Esophagus squamous epithelium (tissue), 5 donors: ENCODE measurements at regions of chr4 and their contacts with region 1.

Region 1: DNA sequence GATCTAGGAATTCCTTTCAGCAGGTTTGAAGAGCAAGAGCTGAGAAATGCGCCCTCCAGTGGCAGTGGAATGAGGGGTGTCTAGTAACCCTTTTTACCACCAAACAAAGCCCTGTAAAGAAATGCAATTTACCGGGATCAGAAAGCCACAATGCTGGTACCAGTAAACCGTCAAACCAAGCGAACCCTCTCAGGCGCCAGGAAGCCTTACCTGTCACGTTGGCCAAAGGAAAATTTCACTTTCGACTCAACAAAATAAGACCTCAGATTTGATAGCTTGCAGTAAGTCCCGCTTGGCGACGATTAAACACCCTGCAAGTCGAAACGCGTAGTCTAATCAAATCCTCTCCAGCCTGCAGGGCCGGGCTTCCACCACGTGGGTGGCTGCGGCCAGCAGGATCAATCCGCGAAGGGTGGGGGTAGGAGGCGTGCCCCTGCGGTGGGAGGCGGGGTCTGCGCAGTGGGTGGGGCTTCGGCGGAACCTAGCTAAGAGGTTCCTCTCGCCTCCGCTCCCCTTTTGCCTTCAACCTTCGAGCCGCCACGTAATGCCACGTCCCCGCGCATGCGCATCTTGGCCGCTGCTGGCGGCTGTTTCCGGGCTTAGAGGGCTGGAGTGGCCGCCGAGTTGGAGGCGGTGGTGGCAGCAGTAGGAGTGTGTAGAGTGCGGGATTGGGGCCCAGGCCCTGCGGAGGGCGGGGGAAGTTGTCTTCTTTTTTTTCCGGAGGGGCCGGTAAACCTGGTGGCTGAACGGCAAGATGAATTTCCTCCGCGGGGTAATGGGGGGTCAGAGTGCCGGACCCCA is at the start of gene USO1:
- DNase-seq: peak; percentile 91
- H3K4me3 ChIP-seq: peak within 1 kb of the TSS; percentile 82 to 100 (median 92)
- H3K27ac ChIP-seq: peak within 1 kb of the TSS; percentile 97 to 100 (median 100)
- H3K4me1 ChIP-seq: peaks cover 10 to 63% (median 29%) of the 10 kb centered on the region in 3 donors
- H3K27me3 ChIP-seq: no peaks in the 10 kb centered on the region
- CTCF ChIP-seq: peak; percentile 47 to 87 (median 78)
- POLR2A ChIP-seq: peak in 3 of 4 donors; percentile 94 to 98 (median 94)
- total RNA-seq, gene USO1: 49.0 to 79.2 (median 69.8) TPM

Region 2: DNA sequence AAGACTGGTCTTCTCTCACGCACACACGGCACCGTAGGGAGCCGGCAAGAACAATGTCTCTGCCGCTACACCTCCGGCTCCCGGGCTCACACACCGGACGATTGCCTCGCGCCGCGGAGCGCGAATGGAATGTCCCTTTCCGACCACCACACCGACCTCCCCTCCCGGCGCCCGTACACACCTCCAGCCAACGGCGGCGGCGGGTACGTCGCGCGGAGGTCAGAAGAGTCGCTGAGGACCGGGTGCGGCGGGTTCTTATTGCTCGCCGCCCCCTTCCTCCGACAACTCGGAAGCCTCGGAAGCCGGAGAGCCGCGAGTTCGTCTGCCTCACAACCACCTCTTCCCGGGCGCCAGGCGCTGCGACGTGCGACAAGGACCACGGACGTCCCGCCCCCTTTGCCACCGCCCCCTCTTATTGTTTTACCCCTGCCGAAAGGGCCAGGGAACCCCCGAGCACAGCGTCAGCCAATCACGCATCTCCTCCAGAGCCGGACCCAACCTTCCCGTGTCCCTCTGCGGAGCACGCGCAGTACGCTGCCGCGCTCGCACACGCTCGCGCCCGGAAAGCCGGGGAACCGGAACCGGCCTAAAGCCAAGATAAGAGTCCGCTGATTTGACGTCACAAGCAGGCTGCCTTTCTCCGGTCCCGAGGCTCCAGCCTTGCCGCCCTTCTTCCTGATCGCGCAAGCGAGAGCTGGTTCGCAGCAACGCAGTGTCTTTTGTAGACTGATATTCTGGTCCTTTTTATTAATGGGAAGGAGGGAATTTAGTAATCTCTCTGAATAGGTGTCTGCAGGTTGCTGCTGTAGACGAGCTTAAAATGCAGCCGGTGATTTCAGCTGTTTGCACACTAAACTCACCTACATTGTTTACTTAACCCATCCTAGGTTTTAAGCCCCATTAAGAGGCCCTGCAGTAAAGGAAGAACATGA is 51.0 kb before region 1 on chr4 and contains the start of gene G3BP2:
- intact Hi-C with region 1: loop called (anchors 5 kb)
- DNase-seq: peak; percentile 93
- H3K4me3 ChIP-seq: peak within 1 kb of the TSS; percentile 63 to 89 (median 84)
- H3K27ac ChIP-seq: peak within 1 kb of the TSS; percentile 90 to 97 (median 94)
- H3K4me1 ChIP-seq: peaks cover 23 to 53% (median 24%) of the 10 kb centered on the region in 3 donors
- H3K27me3 ChIP-seq: no peaks in the 10 kb centered on the region
- CTCF ChIP-seq: peak in 1 of 6 experiments; percentile 9
- POLR2A ChIP-seq: peak in 3 of 4 donors; percentile 72 to 96 (median 88)
- total RNA-seq, gene G3BP2: 51.5 to 90.2 (median 65.1) TPM